A673 (cell line): ENCODE measurements at regions of chr9 and their contacts with region 1.

Region 1: DNA sequence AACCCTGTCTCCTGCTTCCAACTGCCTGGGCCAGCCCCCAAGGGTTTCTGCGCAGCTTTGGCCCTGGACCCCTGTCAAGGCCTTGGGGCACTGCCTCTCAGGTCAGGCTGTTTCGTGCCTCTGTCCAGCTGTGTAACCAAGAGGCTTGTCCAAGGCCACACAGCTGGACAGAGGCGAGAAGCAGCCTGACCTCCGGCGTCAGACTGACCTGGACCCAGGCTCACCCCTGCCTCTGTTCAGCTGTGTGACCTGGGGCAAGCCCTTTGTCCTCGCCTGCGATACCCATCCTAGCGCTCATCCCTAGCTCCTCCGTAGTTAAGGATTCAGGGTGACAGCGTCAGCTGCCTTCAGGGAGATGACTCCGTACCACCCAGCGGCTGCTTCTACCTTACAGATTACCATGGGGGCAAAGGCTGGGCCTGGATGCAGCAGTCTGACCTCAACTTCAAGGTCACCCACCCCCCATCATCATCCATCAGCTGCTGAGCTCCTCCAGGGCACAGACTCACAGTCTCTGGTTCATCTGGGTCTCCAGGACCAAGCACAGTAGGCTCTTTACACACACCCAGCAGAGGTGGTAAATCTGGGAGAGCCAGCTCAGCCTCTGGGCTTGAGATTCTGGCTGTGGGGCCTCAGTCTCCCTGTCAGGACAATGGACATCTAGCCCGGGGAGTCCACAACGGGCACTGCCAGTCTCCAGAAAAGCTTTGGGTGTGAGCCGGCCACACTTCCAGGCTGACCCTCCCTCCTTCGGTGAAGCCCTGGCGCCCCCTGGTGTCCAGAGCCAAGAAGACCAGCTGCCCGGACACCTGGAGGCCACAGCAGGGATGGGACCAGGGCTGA is 7.9 kb downstream of the AK1 start:
- DNase-seq: peak; percentile 82
- H3K4me3 ChIP-seq: no peak overlapping the region
- H3K27ac ChIP-seq: no peak overlapping the region
- H3K4me1 ChIP-seq: no peaks in the 10 kb centered on the region
- H3K27me3 ChIP-seq: no peaks in the 10 kb centered on the region
- CTCF ChIP-seq: peak; percentile 94

Region 2: GRCh38 chr9:126611592-126612325 is 1257.8 kb before region 1 on chr9:
- CTCF ChIA-PET with region 1: interaction called, 11 read pairs
- POLR2A ChIA-PET with region 1: no interaction called
- intact Hi-C with region 1: no loop called
- DNase-seq: peak; percentile 80
- H3K4me3 ChIP-seq: no peak overlapping the region
- H3K27ac ChIP-seq: no peak overlapping the region
- H3K4me1 ChIP-seq: peaks cover 16% of the 10 kb centered on the region
- H3K27me3 ChIP-seq: peaks cover 94% of the 10 kb centered on the region
- CTCF ChIP-seq: peak; percentile 86

Region 3: GRCh38 chr9:127734747-127735529 is 134.6 kb before region 1 on chr9 and contains the start of gene TOR2A:
- CTCF ChIA-PET with region 1: interaction called, 7 read pairs
- POLR2A ChIA-PET with region 1: no interaction called
- intact Hi-C with region 1: loop called (anchors 2 kb)
- DNase-seq: peak; percentile 99
- H3K4me3 ChIP-seq: peak within 1 kb of the TSS; percentile 69
- H3K27ac ChIP-seq: peak within 1 kb of the TSS; percentile 83
- H3K4me1 ChIP-seq: peaks cover 10% of the 10 kb centered on the region
- H3K27me3 ChIP-seq: no peaks in the 10 kb centered on the region
- CTCF ChIP-seq: peak; percentile 98
- total RNA-seq, gene TOR2A: 9.1 and 9.2 TPM in 2 replicates

Region 4: DNA sequence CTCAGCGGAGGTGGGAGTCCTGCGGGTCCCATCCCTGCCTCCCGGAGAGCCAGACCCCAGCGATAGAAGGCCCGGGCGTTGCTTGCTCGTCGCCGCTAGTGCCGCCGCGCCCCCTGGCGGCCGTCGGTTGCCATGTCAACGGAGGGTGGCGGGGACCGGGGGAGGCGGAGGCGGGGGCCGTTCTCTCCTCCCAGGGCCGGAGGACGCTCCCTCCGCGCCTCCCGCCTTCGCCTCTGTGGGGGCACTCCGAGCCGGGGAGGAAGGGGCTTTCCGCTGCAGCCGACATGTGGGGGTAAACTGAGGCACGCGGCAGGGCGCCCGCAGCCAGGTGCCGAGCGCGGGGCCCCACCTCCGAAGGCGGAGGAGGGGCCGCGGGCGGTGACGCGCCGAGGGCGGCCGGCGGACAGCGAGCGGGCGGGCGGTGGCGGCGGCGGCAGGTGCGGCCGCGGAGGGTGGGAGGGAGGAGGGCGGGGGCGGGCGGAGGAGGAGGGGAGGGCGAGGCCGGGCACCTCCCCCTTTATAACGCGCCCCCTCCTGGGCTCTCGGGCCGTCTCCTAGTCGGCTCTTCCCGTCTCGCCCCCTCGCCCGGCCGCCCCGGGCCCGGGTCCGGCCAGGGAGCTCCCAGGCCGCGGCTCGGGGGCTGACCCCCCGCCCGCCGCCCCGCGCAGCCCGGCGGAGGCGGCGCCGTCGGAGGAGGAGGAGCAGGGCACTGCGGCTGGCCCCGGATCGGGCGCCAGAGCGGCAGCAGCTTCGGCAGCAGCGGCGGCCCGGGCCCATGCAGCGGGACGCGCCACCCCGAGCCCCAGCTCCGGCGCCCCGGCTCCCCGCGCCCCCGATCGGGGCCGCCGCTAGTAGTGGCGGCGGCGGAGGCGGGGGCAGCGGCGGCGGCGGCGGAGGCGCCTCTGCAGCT is 84.3 kb before region 1 on chr9:
- CTCF ChIA-PET with region 1: no interaction called
- POLR2A ChIA-PET with region 1: no interaction called
- intact Hi-C with region 1: loop called (anchors 5 kb)
- DNase-seq: peak; percentile 90
- H3K4me3 ChIP-seq: peak overlapping the region; percentile 77
- H3K27ac ChIP-seq: peak overlapping the region; percentile 93
- H3K4me1 ChIP-seq: peaks cover 6% of the 10 kb centered on the region
- H3K27me3 ChIP-seq: no peaks in the 10 kb centered on the region
- CTCF ChIP-seq: peak; percentile 94

Region 5: DNA sequence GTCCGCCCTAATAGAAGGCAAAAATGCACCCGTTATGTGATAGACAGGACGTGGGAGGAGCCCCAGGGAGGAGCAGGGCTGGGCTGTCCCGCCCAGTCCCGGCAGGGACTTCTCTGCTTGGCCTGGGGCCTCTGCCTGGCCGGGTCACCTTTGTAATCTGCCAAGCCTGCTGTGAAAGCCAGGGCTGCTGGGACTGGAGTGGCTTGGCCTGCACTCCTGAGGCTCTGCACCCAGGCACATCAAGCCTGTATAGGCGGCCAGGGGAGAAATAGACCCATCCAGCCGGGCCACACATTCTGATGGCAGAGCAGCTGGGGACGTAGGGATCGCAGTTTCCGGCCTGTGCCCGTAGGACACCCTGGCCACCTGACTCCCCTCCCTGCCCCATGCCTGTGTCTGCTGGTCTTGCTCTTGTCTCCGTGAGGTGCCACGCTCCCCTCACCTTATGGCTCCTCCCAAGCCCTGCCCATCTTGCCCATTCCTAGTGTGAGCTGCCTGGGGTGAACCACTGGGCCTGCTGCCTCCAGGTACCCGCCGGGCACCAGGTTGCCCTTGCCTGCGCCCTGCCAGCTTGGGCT is 759.0 kb after region 1 on chr9:
- CTCF ChIA-PET with region 1: interaction called, 13 read pairs
- POLR2A ChIA-PET with region 1: no interaction called
- intact Hi-C with region 1: no loop called
- DNase-seq: no peak
- H3K4me3 ChIP-seq: no peak overlapping the region
- H3K27ac ChIP-seq: no peak overlapping the region
- H3K4me1 ChIP-seq: no peaks in the 10 kb centered on the region
- H3K27me3 ChIP-seq: no peaks in the 10 kb centered on the region
- CTCF ChIP-seq: no peak